Activated CD8-positive, alpha-beta memory T cell treated with anti-CD3 and anti-CD28 coated beads, Interleukin-2, amount 10 ng/mL, durations not matched to agents 7 days and 5 days (primary cell): ENCODE measurements at regions of chr2 and their contacts with region 1.

Region 1: DNA sequence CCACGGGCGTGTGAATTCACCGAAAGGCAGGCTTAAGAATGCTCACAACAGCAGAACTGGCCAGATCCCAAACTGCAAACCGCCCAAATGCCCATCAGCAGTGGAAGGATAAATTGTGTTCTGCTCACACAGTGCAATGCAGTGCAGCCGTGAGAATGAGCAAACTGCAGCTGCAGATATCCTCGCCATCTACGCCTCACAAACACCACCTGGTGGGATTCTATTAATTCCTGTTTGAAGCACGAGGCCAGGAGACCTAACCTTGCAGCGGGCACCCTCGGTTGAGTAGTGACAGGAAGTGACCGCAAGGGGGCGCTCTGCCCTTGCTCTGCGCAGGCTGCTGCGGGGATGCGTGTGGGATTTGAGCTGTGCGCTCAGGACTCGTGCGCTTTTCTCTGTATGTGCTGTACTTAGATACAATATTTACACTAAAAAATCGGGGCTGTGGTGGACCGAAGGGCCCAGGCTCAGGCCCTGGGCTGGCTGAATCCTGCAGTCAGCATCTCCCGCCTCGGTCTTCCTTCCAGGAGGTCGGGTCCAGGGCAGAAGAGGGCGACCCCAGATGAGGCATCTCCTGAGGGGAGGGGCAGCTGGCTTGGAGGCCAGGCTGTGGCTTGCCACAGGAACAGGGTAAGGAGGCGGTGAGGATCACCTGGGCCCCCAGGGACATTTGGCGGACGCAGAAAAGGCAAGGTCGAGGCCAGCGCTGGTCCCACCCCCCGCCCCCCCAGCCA is 19.8 kb upstream of the PDIA6 start:
- DNase-seq: peak; percentile 84
- ATAC-seq: peak; percentile 90
- H3K4me3 Mint-ChIP-seq: no peak overlapping the region
- H3K27ac Mint-ChIP-seq: no peak overlapping the region
- H3K4me1 Mint-ChIP-seq: peaks cover 4% of the 10 kb centered on the region
- H3K27me3 Mint-ChIP-seq: peaks cover 51% of the 10 kb centered on the region

Region 2: DNA sequence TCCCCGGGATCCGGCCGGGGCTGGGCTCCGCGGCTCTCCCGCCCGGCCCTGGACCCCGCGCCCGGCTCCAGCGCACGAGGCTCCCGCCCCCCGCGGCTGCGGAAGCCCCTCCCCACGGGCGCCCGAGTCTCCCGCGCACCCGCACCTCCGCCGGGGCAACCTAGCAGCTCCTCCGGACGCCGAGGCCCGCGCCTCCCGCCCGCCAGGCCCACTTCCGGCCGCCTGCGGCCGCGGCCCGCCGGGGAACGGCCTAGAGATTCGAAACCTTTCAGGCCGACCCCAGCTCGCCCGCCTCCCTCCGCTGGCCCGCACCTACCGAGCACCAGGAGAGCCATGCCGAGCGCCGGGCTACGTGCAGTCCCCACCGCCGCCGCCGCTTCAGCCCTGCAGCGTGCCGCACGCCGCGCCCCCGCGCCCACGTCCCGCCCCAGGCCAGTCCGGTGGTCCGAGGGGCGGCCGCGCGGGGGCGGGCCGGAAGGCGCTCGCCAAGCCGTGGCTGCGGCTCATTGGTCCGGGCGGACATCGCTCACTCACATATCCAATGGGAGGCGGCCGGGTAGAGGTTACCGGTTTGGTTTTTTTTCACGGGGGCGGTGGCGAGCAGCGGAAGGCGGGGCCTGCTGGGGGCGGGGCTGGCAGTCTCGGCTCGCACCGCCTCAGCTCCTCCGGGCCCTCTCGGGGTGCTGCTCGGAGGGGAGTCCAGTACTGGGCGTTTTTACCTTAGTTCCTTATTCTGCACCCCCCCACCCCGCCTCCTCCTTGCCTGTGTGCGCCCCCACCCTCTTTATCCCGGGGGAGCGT is 19.8 kb before region 1 on chr2 and contains the start of gene PDIA6:
- CTCF ChIA-PET with region 1: interaction called, 19 read pairs
- DNase-seq: peak; percentile 96
- ATAC-seq: peak; percentile 94
- H3K4me3 Mint-ChIP-seq: peak within 1 kb of the TSS; percentile 88
- H3K27ac Mint-ChIP-seq: peak within 1 kb of the TSS; percentile 92
- H3K4me1 Mint-ChIP-seq: peaks cover 34% of the 10 kb centered on the region
- H3K27me3 Mint-ChIP-seq: peaks cover 21% of the 10 kb centered on the region
- total RNA-seq, gene PDIA6: 134 to 174 TPM

Region 3: GRCh38 chr2:10864861-10865636 is 32.7 kb after region 1 on chr2:
- CTCF ChIA-PET with region 1: interaction called, 10 read pairs
- DNase-seq: peak; percentile 51
- ATAC-seq: peak; percentile 90
- H3K4me3 Mint-ChIP-seq: no peak overlapping the region
- H3K27ac Mint-ChIP-seq: no peak overlapping the region
- H3K4me1 Mint-ChIP-seq: peaks cover 36% of the 10 kb centered on the region
- H3K27me3 Mint-ChIP-seq: peaks cover 77% of the 10 kb centered on the region

Region 4: DNA sequence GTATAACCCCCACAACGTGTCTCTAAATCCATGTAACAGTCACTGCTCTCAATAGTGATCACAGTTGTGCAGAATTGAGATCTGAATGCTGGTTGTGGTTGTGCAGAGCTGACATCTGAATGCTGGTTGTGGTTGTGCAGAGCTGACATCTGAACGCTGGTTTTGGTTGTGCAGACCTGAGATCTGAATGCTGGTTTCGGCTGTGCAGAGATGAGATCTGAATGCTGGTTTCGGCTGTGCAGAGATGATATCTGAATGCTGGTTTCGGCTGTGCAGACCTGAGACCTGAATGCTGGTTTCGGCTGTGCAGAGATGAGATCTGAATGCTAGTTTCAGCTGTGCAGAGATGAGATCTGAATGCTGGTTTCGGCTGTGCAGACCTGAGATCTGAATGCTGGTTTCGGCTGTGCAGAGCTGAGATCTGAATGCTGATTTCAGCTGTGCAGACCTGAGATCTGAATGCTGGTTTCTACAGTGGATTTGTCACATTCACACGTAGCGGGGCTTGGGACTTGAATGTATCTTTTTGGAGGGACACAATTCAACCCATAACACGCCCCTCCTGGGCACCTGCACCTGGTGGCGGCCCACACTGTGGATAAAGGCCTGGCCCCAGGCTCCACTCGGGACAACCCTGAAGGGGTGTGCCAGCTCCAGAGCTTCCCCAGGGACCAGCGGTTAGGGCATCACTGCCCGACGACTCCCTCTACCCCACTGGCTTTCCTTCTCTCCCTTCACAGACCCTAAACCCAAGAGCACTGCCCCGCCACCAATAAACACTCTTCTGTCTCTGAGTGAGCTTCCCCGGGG is 271.8 kb after region 1 on chr2:
- CTCF ChIA-PET with region 1: interaction called, 10 read pairs
- DNase-seq: peak; percentile 88
- ATAC-seq: peak; percentile 72
- H3K4me3 Mint-ChIP-seq: peak overlapping the region; percentile 9
- H3K27ac Mint-ChIP-seq: peak overlapping the region; percentile 81
- H3K4me1 Mint-ChIP-seq: peaks cover 46% of the 10 kb centered on the region
- H3K27me3 Mint-ChIP-seq: peaks cover 38% of the 10 kb centered on the region

Region 5: GRCh38 chr2:11124503-11125068 is 292.2 kb after region 1 on chr2:
- CTCF ChIA-PET with region 1: interaction called, 121 read pairs
- DNase-seq: peak; percentile 75
- ATAC-seq: peak; percentile 74
- H3K4me3 Mint-ChIP-seq: no peak overlapping the region
- H3K27ac Mint-ChIP-seq: no peak overlapping the region
- H3K4me1 Mint-ChIP-seq: peaks cover 8% of the 10 kb centered on the region
- H3K27me3 Mint-ChIP-seq: peaks cover 21% of the 10 kb centered on the region